ENCODE measurements at regions of chr22 and their contacts with region 1.

Region 1: GRCh38 chr22:43090130-43090789 is 1.1 kb upstream of the TTLL1 start:
- DNase-seq: peak; percentile 60
- H3K4me3 Mint-ChIP-seq: no peak overlapping the region
- H3K27ac Mint-ChIP-seq: no peak overlapping the region
- H3K4me1 Mint-ChIP-seq: peaks cover 7% of the 10 kb centered on the region
- H3K27me3 Mint-ChIP-seq: no peaks in the 10 kb centered on the region
- CTCF ChIP-seq: peak; percentile 12

Region 2: GRCh38 chr22:42780070-42780540 is 310.2 kb before region 1 on chr22:
- CTCF ChIA-PET with region 1: no interaction called
- intact Hi-C with region 1: loop called (anchors 10 kb)
- DNase-seq: peak; percentile 68
- H3K4me3 Mint-ChIP-seq: no peak overlapping the region
- H3K27ac Mint-ChIP-seq: no peak overlapping the region
- H3K4me1 Mint-ChIP-seq: no peaks in the 10 kb centered on the region
- H3K27me3 Mint-ChIP-seq: no peaks in the 10 kb centered on the region
- CTCF ChIP-seq: peak; percentile 83

Measured in Calu3 (cell line).